Dorsolateral prefrontal cortex (tissue), 120 donors: ENCODE measurements at regions of chr6 and their contacts with region 1.

Region 1: DNA sequence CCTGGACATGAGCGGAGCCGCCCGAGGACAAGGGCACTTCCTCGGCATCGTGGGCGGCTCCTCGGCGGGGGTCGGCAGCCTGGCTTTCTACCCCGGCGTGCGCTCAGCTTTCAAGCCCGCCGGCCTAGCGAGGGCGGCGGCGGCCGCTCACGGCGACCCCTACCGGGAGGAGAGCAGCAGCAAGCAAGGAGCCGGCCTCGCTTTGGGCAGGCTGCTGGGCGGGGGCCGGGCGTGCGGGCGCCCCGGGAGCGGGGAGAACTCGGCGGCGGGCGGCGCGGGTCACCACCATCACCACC is 6.7 kb downstream of the PRDM13 start:
- DNase-seq: no peak
- H3K4me3 ChIP-seq: peak overlapping the region in 57 of 59 donors; percentile 5 to 62 (median 42)
- H3K27ac ChIP-seq: no peak overlapping the region
- H3K27me3 ChIP-seq: peaks cover 30 to 100% (median 100%) of the 10 kb centered on the region in 45 donors
- CTCF ChIP-seq: peak in 24 of 56 donors; percentile 8 to 44 (median 20)

Region 2: GRCh38 chr6:100455230-100456124 is 842.1 kb after region 1 on chr6:
- intact Hi-C with region 1: loop called in 1 of 2 experiments (anchors 10 kb)
- DNase-seq: no peak
- H3K4me3 ChIP-seq: no peak overlapping the region
- H3K27ac ChIP-seq: no peak overlapping the region
- H3K27me3 ChIP-seq: peaks cover 42 to 99% (median 94%) of the 10 kb centered on the region in 45 donors
- CTCF ChIP-seq: no peak